ENCODE measurements at regions of chr1 and their contacts with region 1.

Region 1: GRCh38 chr1:151311589-151312331 is 15.5 kb downstream of the PI4KB start:
- DNase-seq: peak; percentile 100
- ATAC-seq: peak; percentile 89
- H3K4me3 ChIP-seq: no peak overlapping the region
- H3K27ac ChIP-seq: peak overlapping the region; percentile 68
- H3K4me1 ChIP-seq: peaks cover 39% of the 10 kb centered on the region
- H3K27me3 ChIP-seq: no peaks in the 10 kb centered on the region
- CTCF ChIP-seq: no peak
- POLR2A ChIP-seq: 0 out of 2 replicates have a peak, but pooled peaks have one; percentile 44
- RAD21 ChIP-seq: no peak; the same call in 1 of the 2 replicates

Region 2: GRCh38 chr1:150979092-150980056 is 332.4 kb before region 1 on chr1:
- CTCF ChIA-PET with region 1: no interaction called
- POLR2A ChIA-PET with region 1: no interaction called
- dilution Hi-C with region 1: no loop called
- in situ Hi-C with region 1: no loop called
- intact Hi-C with region 1: no loop called
- DNase-seq: peak; percentile 85
- ATAC-seq: peak; percentile 32
- H3K4me3 ChIP-seq: no peak overlapping the region
- H3K27ac ChIP-seq: no peak overlapping the region
- H3K4me1 ChIP-seq: peaks cover 22% of the 10 kb centered on the region
- H3K27me3 ChIP-seq: no peaks in the 10 kb centered on the region; the same call in 1 of the 2 replicates
- CTCF ChIP-seq: peak; percentile 100; the same call in 1 of the 2 replicates
- POLR2A ChIP-seq: no peak
- RAD21 ChIP-seq: peak; percentile 73

Region 3: GRCh38 chr1:151024540-151025146 is 287.1 kb before region 1 on chr1:
- CTCF ChIA-PET with region 1: no interaction called
- POLR2A ChIA-PET with region 1: no interaction called
- dilution Hi-C with region 1: no loop called
- in situ Hi-C with region 1: no loop called
- intact Hi-C with region 1: no loop called
- DNase-seq: peak; percentile 62
- ATAC-seq: peak; percentile 95
- H3K4me3 ChIP-seq: no peak overlapping the region
- H3K27ac ChIP-seq: no peak overlapping the region
- H3K4me1 ChIP-seq: no peaks in the 10 kb centered on the region
- H3K27me3 ChIP-seq: no peaks in the 10 kb centered on the region
- CTCF ChIP-seq: peak; percentile 71
- POLR2A ChIP-seq: no peak
- RAD21 ChIP-seq: peak; percentile 79

Region 4: GRCh38 chr1:151327223-151327902 is 15.6 kb after region 1 on chr1 and contains the start of gene PI4KB:
- CTCF ChIA-PET with region 1: interaction called, 5 read pairs
- POLR2A ChIA-PET with region 1: interaction called, 4 read pairs
- dilution Hi-C with region 1: no loop called
- in situ Hi-C with region 1: no loop called
- intact Hi-C with region 1: loop called (anchors 1 kb)
- DNase-seq: peak; percentile 98
- ATAC-seq: peak; percentile 96
- H3K4me3 ChIP-seq: peak within 1 kb of the TSS; percentile 88
- H3K27ac ChIP-seq: peak within 1 kb of the TSS; percentile 88
- H3K4me1 ChIP-seq: peaks cover 9% of the 10 kb centered on the region
- H3K27me3 ChIP-seq: no peaks in the 10 kb centered on the region
- CTCF ChIP-seq: no peak
- POLR2A ChIP-seq: peak; percentile 79
- RAD21 ChIP-seq: no peak
- total RNA-seq, gene PI4KB: 77.2 and 94.5 TPM in 2 replicates

Region 5: DNA sequence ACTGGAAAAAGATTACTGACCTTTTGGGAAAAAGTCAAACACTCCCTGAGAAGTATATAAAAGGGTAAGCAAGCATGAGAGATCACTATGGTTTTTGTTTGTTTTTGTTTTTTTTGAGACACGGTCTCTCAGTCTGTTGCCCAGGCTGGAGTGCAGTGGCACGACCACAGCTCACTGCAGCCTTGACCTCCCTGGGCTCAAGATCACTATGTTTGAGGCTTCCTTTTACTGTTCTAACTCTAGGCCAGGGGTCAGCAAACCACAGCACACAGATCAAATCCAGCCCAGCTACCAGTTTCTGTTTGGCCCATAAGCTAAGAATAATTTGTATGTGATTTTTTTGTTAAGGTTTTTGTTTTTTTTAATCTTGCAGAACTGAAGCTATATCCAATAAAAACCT is 113.3 kb after region 1 on chr1:
- CTCF ChIA-PET with region 1: no interaction called
- POLR2A ChIA-PET with region 1: no interaction called
- dilution Hi-C with region 1: no loop called
- in situ Hi-C with region 1: no loop called
- intact Hi-C with region 1: no loop called
- DNase-seq: no peak
- ATAC-seq: no peak
- H3K4me3 ChIP-seq: no peak overlapping the region
- H3K27ac ChIP-seq: no peak overlapping the region
- H3K4me1 ChIP-seq: no peaks in the 10 kb centered on the region
- H3K27me3 ChIP-seq: no peaks in the 10 kb centered on the region
- CTCF ChIP-seq: no peak
- POLR2A ChIP-seq: no peak
- RAD21 ChIP-seq: no peak

Region 6: GRCh38 chr1:151510957-151511635 is 199.3 kb after region 1 on chr1 and contains the start of gene CGN:
- CTCF ChIA-PET with region 1: no interaction called
- POLR2A ChIA-PET with region 1: no interaction called
- dilution Hi-C with region 1: no loop called
- in situ Hi-C with region 1: no loop called
- intact Hi-C with region 1: no loop called
- DNase-seq: peak; percentile 75
- ATAC-seq: peak; percentile 99
- H3K4me3 ChIP-seq: peak within 1 kb of the TSS; percentile 54
- H3K27ac ChIP-seq: no peak within 1 kb of the TSS
- H3K4me1 ChIP-seq: peaks cover 4% of the 10 kb centered on the region
- H3K27me3 ChIP-seq: peaks cover 33% of the 10 kb centered on the region
- CTCF ChIP-seq: no peak
- POLR2A ChIP-seq: no peak
- RAD21 ChIP-seq: no peak
- total RNA-seq, gene CGN: 0.28 and 0.36 TPM in 2 replicates